ENCODE measurements at regions of chr2 and their contacts with region 1.

Region 1: GRCh38 chr2:191165176-191165643 is 14.4 kb upstream of the STAT4 start:
- DNase-seq: no peak
- H3K4me3 Mint-ChIP-seq: no peak overlapping the region
- H3K27ac Mint-ChIP-seq: no peak overlapping the region
- H3K4me1 Mint-ChIP-seq: peaks cover 13% of the 10 kb centered on the region
- H3K27me3 Mint-ChIP-seq: no peaks in the 10 kb centered on the region

Region 2: DNA sequence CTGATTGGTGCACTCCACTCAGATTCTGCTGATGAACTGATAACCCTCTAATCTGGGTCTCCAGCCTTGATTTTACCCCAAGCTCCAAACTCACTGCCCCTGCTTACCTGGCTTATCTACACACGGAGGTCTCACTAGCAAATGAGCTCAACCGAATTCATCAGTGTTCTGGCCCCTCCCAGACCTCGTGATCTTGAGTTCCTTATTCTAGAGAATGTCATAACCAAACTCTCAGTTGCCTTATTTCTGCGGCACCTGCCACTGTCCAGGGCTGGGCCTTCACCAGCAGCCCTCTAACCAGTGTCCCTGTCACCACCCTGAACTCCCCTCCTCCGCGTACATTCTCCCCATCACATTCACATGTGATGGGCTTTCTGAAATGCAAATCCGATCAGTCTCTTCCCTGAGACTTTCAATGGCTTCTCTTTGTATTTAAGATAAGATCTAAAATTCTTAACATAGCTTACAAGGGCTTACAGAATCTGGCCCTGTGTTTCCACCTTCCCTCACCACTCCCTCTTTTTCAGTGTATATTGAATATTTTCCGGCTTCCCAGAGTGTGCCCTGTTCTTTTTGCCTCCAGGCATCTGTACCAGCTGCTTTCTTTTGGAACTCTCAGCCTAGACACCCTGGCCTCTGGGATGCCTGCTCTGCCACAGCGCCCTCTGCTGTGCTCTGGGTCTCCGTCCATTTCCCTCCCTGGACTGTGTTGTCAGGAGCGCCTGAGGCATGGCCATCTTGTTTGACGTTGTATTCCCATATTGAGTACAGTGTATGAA is 485.2 kb before region 1 on chr2:
- CTCF ChIA-PET with region 1: no interaction called
- POLR2A ChIA-PET with region 1: no interaction called
- intact Hi-C with region 1: no loop called
- DNase-seq: peak; percentile 80
- H3K4me3 Mint-ChIP-seq: peak overlapping the region; percentile 61
- H3K27ac Mint-ChIP-seq: peak overlapping the region; percentile 98
- H3K4me1 Mint-ChIP-seq: peaks cover 66% of the 10 kb centered on the region
- H3K27me3 Mint-ChIP-seq: no peaks in the 10 kb centered on the region

Region 3: GRCh38 chr2:191038241-191038725 is 126.9 kb before region 1 on chr2:
- CTCF ChIA-PET with region 1: no interaction called
- POLR2A ChIA-PET with region 1: no interaction called
- intact Hi-C with region 1: no loop called
- DNase-seq: peak; percentile 63
- H3K4me3 Mint-ChIP-seq: no peak overlapping the region
- H3K27ac Mint-ChIP-seq: peak overlapping the region; percentile 68
- H3K4me1 Mint-ChIP-seq: peaks cover 48% of the 10 kb centered on the region
- H3K27me3 Mint-ChIP-seq: no peaks in the 10 kb centered on the region

Region 4: DNA sequence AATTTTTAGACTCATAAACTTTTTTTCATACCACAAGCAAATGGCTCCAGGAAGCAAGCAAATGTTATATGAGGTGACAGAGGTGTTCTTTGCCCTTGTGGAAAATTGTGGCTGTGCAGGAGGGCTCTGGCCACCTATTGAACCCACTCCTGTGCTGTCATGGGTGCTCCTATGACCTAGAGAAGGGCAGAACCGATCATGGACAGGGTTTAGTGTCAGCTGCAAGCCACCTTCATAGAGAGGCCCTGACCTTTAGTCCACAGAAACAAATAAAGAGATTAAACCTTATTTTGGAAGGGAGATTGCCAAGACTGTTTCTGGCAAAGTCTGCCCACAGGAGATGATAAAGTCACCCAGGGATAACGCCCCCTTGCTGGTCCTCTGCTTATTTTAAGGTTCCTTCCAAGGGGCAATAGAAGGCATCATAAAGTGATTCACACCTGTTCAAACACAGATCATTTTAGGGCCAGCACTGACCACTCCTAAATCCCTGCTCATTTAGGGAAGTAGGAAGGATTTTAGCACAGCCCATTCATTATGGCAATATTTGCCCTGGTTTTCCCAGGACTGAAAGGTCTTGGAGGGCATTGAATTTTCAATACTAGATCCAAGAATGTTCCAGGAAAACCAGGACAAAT is 11.7 kb after region 1 on chr2:
- CTCF ChIA-PET with region 1: interaction called, 13 read pairs
- POLR2A ChIA-PET with region 1: no interaction called
- intact Hi-C with region 1: no loop called
- DNase-seq: no peak
- H3K4me3 Mint-ChIP-seq: no peak overlapping the region
- H3K27ac Mint-ChIP-seq: no peak overlapping the region
- H3K4me1 Mint-ChIP-seq: peaks cover 40% of the 10 kb centered on the region
- H3K27me3 Mint-ChIP-seq: no peaks in the 10 kb centered on the region

Region 5: DNA sequence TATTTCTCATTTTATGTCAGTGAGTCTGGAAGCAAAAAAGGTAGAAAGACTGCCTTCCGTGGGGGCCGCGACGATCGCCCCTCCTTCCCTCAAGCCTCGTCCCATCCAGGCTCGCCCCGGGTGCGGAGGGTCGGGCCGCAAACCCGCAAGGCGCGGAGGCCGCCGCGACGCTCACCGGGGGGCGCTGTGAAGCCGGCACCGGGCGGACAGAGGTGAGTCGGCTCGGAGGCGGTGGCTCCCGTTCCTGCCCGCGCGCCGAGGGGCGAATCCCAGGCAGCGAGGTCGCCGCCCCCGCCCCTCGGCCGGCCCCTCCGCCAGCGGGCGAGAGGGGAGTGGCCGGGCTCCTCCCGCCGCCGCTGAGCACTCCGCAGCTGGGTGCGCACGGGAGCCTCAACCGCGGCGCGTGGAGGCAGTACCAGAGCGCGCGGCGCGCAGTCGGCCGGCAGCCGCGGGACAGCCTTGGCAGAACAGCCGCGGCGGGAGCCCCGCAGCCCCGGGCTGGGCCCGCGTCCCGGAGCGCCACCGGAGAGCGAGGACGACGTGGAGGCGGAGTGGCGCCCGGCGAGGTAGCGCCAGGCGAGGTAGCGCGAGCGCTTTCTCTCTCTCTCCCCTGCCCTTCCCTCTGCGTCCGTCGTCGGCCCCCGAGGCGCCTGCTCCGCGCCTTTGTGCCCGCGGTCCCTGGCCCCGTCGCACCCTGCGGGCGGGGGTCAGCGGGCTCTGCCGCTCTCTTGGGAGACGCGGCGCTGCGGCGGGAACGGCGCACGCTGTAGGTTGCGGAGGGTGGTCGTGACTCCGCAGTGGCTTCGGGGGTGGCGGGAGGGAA is 80.0 kb after region 1 on chr2 and contains the start of gene MYO1B:
- CTCF ChIA-PET with region 1: interaction called, 9 read pairs
- POLR2A ChIA-PET with region 1: no interaction called
- intact Hi-C with region 1: loop called (anchors 2 kb)
- DNase-seq: peak; percentile 74
- H3K4me3 Mint-ChIP-seq: peak within 1 kb of the TSS; percentile 74
- H3K27ac Mint-ChIP-seq: no peak within 1 kb of the TSS
- H3K4me1 Mint-ChIP-seq: peaks cover 12% of the 10 kb centered on the region
- H3K27me3 Mint-ChIP-seq: peaks cover 15% of the 10 kb centered on the region
- total RNA-seq, gene MYO1B: 13.5 to 15.6 TPM

Region 6: GRCh38 chr2:191369036-191369435 is 203.8 kb after region 1 on chr2:
- CTCF ChIA-PET with region 1: no interaction called
- POLR2A ChIA-PET with region 1: no interaction called
- intact Hi-C with region 1: loop called (anchors 1 kb)
- DNase-seq: no peak
- H3K4me3 Mint-ChIP-seq: no peak overlapping the region
- H3K27ac Mint-ChIP-seq: no peak overlapping the region
- H3K4me1 Mint-ChIP-seq: no peaks in the 10 kb centered on the region
- H3K27me3 Mint-ChIP-seq: no peaks in the 10 kb centered on the region

Region 7: DNA sequence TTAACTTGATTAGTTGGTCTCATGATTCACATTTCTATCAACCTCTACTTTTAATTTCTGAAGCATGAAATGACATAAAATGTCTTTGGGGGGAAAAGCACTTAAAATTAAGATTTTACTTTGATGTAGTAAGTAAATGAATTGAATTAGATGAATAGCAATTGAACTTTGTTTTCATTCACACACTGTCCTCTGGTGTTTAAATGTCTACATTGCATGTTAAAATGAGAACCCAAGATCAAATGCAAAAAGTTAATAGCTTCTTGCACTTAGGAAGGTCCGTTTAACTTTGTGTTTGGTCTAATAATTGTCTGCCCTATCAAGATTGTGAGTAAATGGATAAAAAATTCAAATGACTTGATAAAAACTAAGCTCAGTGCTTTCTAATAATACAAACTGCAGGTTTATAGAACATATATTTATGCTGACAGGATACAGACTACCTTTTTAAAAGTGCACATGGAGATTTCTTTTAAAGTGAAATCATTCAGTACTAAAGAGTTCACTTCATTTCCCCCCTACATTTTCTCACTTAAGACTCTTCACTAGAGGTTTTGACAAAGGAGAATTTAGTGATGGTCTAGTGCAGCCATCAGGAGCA is 356.5 kb after region 1 on chr2:
- CTCF ChIA-PET with region 1: interaction called, 43 read pairs
- POLR2A ChIA-PET with region 1: no interaction called
- intact Hi-C with region 1: loop called (anchors 1 kb)
- DNase-seq: no peak
- H3K4me3 Mint-ChIP-seq: no peak overlapping the region
- H3K27ac Mint-ChIP-seq: no peak overlapping the region
- H3K4me1 Mint-ChIP-seq: no peaks in the 10 kb centered on the region
- H3K27me3 Mint-ChIP-seq: peaks cover 1% of the 10 kb centered on the region

Measured in activated CD4-positive, alpha-beta memory T cell treated with anti-CD3 and anti-CD28 coated beads for 36 hours (primary cell).